Natural killer cell (primary cell): ENCODE measurements at regions of chr18 and their contacts with region 1.

Region 1: GRCh38 chr18:56650944-56651770 is at the start of gene WDR7:
- DNase-seq: peak; percentile 83 to 98
- ATAC-seq: peak; percentile 71 to 92 (median 91)
- H3K4me3 ChIP-seq: peak within 1 kb of the TSS; percentile 93
- H3K4me3 Mint-ChIP-seq: peak within 1 kb of the TSS; percentile 94
- H3K27ac ChIP-seq: peak within 1 kb of the TSS; percentile 90
- H3K27ac Mint-ChIP-seq: peak within 1 kb of the TSS; percentile 95 to 98
- H3K4me1 ChIP-seq: peaks cover 32% of the 10 kb centered on the region
- H3K4me1 Mint-ChIP-seq: peaks cover 66 to 80% of the 10 kb centered on the region in 2 donors
- H3K27me3 ChIP-seq: no peaks in the 10 kb centered on the region
- H3K27me3 Mint-ChIP-seq: no peaks in the 10 kb centered on the region
- CTCF ChIP-seq: no peak
- total RNA-seq, gene WDR7: 71.1 to 103 (median 77.3) TPM

Region 2: DNA sequence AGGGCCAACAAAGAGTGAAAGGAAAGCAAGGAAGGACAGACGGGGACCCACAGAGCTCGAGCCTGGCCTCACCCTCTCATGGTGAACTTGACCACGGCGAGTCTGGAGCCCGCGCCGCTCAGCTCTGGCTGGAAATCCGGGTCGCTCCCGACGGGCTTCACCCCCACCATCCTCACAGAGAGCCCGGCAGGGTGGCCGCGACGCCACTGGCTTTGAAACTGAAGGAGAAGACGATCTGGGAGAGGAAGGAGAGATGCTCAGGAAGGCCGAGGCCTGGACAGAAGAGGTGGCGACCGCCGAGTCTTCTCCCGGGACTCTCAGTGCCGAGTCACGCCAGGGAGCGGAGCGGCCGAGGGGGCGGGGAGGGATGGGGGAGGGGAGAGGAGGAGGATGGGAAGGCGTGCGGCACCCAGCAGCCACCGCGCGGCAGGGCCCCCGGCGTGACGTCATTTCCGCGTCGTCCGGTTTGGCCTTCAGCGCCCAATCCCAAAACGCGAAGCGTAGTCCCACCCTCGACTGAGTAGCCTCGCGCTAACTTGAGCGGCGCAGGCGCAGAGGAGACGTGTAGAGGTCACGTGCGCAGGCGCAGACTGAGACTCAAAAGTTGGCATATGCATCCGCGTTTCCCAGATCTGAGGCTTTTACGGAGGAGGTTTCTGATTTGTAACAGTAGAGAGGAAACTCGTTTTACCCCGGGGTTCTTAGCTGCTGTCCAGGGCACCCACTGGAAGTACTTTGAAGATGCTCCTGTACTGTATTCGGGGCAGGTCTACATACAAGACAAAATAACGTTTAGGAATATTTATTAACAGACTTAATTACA is 12.7 kb before region 1 on chr18 and contains the start of gene TXNL1:
- intact Hi-C with region 1: loop called (anchors 1 kb)
- DNase-seq: peak; percentile 98 to 100
- ATAC-seq: peak; percentile 96 to 100 (median 97)
- H3K4me3 ChIP-seq: peak within 1 kb of the TSS; percentile 93
- H3K4me3 Mint-ChIP-seq: peak within 1 kb of the TSS; percentile 100
- H3K27ac ChIP-seq: peak within 1 kb of the TSS; percentile 96
- H3K27ac Mint-ChIP-seq: peak within 1 kb of the TSS; percentile 96 to 99
- H3K4me1 ChIP-seq: peaks cover 9% of the 10 kb centered on the region
- H3K4me1 Mint-ChIP-seq: peaks cover 48% of the 10 kb centered on the region in 2 donors
- H3K27me3 ChIP-seq: no peaks in the 10 kb centered on the region
- H3K27me3 Mint-ChIP-seq: no peaks in the 10 kb centered on the region
- CTCF ChIP-seq: no peak
- total RNA-seq, gene TXNL1: 43.2 to 44.8 (median 44.0) TPM

Region 3: DNA sequence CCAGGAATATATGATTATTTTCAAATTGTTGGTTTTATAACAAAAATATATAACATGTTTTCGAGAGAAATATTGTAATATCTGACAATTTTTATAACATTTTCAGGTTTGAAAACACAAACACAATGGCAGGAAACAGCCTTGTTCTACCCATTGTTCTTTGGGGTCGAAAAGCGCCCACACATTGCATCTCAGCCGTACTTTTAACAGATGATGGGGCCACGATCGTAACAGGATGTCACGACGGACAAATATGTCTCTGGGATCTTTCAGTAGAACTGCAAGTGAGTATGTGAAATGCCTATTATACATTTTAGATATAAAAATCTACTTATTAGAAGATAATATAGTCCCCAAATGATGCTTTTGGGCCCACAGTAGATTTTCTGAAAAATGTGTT is 21.2 kb after region 1 on chr18:
- intact Hi-C with region 1: loop called (anchors 1 kb)
- DNase-seq: no peak
- ATAC-seq: no peak
- H3K4me3 ChIP-seq: no peak overlapping the region
- H3K4me3 Mint-ChIP-seq: no peak overlapping the region
- H3K27ac ChIP-seq: no peak overlapping the region
- H3K27ac Mint-ChIP-seq: no peak overlapping the region
- H3K4me1 ChIP-seq: peaks cover 14% of the 10 kb centered on the region
- H3K4me1 Mint-ChIP-seq: peaks cover 22 to 40% of the 10 kb centered on the region in 2 donors
- H3K27me3 ChIP-seq: no peaks in the 10 kb centered on the region
- H3K27me3 Mint-ChIP-seq: no peaks in the 10 kb centered on the region
- CTCF ChIP-seq: no peak

Region 4: DNA sequence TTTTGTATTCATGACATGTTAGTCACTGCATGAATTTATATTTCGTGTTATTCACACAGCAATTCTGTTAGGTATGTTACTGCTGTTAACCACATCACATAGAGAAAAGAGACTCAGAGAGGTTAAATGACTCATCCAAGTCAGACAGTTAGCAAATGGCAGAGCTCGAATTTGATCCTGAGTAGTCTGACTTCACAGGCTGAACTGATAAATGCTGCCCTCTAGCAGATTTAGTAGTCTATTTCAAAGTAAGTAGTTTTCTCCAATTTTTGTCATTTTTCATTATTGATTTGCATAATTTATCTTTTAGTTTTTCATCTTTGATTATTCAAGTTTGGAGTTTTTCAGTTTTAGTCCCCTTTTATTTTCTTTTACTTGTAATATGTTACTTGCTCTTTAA is 58.3 kb after region 1 on chr18:
- intact Hi-C with region 1: loop called (anchors 1 kb)
- DNase-seq: peak in 1 of 2 donors; percentile 72
- ATAC-seq: peak; percentile 95 to 100 (median 99)
- H3K4me3 ChIP-seq: no peak overlapping the region
- H3K4me3 Mint-ChIP-seq: no peak overlapping the region
- H3K27ac ChIP-seq: no peak overlapping the region
- H3K27ac Mint-ChIP-seq: peak overlapping the region in 1 of 2 donors; percentile 29
- H3K4me1 ChIP-seq: no peaks in the 10 kb centered on the region
- H3K4me1 Mint-ChIP-seq: peaks cover 5% of the 10 kb centered on the region in 2 donors
- H3K27me3 ChIP-seq: no peaks in the 10 kb centered on the region
- H3K27me3 Mint-ChIP-seq: no peaks in the 10 kb centered on the region
- CTCF ChIP-seq: peak; percentile 53

Region 5: GRCh38 chr18:57621246-57621604 is 970.1 kb after region 1 on chr18:
- intact Hi-C with region 1: loop called (anchors 10 kb)
- DNase-seq: no peak
- ATAC-seq: peak; percentile 1 to 15 (median 10)
- H3K4me3 ChIP-seq: peak overlapping the region; percentile 92
- H3K4me3 Mint-ChIP-seq: peak overlapping the region; percentile 97
- H3K27ac ChIP-seq: peak overlapping the region; percentile 83
- H3K27ac Mint-ChIP-seq: peak overlapping the region; percentile 97
- H3K4me1 ChIP-seq: peaks cover 9% of the 10 kb centered on the region
- H3K4me1 Mint-ChIP-seq: peaks cover 8 to 20% of the 10 kb centered on the region in 2 donors
- H3K27me3 ChIP-seq: no peaks in the 10 kb centered on the region
- H3K27me3 Mint-ChIP-seq: no peaks in the 10 kb centered on the region
- CTCF ChIP-seq: no peak